ENCODE measurements at regions of chr13 and their contacts with region 1.

Region 1: GRCh38 chr13:34076943-34077703 is 259.2 kb downstream of the RFC3 start:
- DNase-seq: no peak
- ATAC-seq: peak in 1 of 4 donors; percentile 46
- H3K4me3 ChIP-seq: peak overlapping the region in 1 of 12 donors; percentile 24
- H3K27ac ChIP-seq: no peak overlapping the region
- H3K4me1 ChIP-seq: peaks cover 0 to 12% (median 3%) of the 10 kb centered on the region in 12 donors
- H3K27me3 ChIP-seq: no peaks in the 10 kb centered on the region
- CTCF ChIP-seq: peak; percentile 34 to 79 (median 66)
- POLR2A ChIP-seq: no peak

Region 2: GRCh38 chr13:33799950-33800592 is 277.1 kb before region 1 on chr13:
- intact Hi-C with region 1: loop called (anchors 2 to 10 kb)
- DNase-seq: no peak
- ATAC-seq: peak in 3 of 4 donors; percentile 28 to 58 (median 53)
- H3K4me3 ChIP-seq: peak overlapping the region in 5 of 12 donors; percentile 4 to 29 (median 15)
- H3K27ac ChIP-seq: peak overlapping the region in 8 of 12 donors; percentile 4 to 45 (median 18)
- H3K4me1 ChIP-seq: peaks cover 0 to 29% (median 13%) of the 10 kb centered on the region in 12 donors
- H3K27me3 ChIP-seq: no peaks in the 10 kb centered on the region
- CTCF ChIP-seq: peak in 11 of 12 donors; percentile 21 to 65 (median 54)
- POLR2A ChIP-seq: no peak

Region 3: DNA sequence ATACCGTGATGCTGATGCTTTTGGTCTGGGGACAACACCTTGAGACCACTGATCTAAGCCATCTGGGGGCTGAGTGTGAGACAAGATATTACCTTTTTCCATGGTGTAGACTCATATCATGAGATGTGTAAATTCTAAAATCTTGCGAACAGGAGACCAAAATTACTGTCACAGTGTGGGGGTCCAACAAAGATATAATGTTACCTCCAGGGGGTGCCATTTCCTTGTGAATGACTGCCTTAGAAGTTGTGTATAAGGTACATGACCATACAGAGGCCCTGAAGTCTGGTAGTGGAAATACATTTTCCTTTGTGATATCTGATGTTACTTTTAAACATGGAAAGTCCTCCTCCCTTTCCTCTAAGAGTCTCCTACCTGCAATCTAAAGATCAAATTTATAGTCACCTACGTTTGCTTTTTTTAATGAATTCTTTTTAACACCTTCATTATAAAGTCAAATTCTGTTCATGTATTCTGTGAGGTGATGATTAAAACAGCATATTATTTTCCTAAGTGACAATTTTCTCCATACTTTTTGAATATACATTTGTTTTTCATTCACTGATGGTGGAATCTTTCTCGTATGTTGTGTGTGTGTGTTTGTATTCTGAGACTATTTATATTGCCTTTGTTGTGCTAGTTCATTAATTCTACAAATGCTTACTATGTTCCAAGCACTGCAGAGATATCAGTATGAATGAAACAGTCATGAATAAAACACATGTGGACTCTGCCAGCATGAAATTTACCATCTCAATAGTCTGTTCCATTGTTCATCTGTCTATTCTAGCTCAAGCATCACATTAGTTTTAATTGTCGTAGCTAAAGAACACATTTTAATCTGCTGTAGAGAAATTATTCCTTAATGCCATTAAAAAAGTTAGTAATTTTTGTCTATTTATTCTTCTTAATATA is 145.5 kb before region 1 on chr13:
- intact Hi-C with region 1: loop called (anchors 2 to 5 kb)
- DNase-seq: peak in 1 of 5 donors; percentile 20
- ATAC-seq: peak in 3 of 4 donors; percentile 79 to 87 (median 84)
- H3K4me3 ChIP-seq: no peak overlapping the region
- H3K27ac ChIP-seq: no peak overlapping the region
- H3K4me1 ChIP-seq: peaks cover 0 to 12% (median 0%) of the 10 kb centered on the region in 12 donors
- H3K27me3 ChIP-seq: no peaks in the 10 kb centered on the region
- CTCF ChIP-seq: peak; percentile 26 to 71 (median 57)
- POLR2A ChIP-seq: no peak

Region 4: DNA sequence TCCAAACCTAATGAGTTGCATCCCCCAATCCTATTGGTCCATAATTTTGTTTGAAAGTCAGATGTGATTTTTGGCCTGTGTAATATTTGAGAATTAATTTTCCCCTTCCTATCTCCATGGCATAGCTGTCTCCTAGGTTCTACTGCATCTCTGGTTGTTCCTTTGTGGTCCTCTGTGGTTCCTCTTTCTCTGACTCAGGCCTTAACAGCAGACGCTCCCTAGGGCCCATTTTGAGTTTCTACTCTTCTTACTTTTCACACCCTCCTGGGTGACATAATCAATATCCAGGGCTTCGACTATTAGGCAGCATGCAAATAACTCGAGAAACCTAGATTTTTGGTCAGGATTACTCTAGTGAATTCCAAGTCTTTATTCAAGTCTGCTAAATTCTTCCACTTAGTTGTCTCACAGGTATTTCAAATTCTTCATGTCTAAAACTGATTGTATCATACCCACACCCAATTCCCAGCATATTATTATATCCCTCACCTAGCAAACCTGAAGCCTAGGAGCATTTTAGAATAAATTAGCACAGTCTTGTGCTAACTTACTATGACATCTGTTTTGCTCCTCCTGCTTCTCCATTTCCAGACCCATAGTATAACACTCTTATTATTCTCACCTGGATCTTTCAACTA is 98.4 kb before region 1 on chr13:
- intact Hi-C with region 1: no loop called
- DNase-seq: no peak
- ATAC-seq: no peak
- H3K4me3 ChIP-seq: no peak overlapping the region
- H3K27ac ChIP-seq: no peak overlapping the region
- H3K4me1 ChIP-seq: no peaks in the 10 kb centered on the region
- H3K27me3 ChIP-seq: no peaks in the 10 kb centered on the region
- CTCF ChIP-seq: no peak
- POLR2A ChIP-seq: no peak

Region 5: DNA sequence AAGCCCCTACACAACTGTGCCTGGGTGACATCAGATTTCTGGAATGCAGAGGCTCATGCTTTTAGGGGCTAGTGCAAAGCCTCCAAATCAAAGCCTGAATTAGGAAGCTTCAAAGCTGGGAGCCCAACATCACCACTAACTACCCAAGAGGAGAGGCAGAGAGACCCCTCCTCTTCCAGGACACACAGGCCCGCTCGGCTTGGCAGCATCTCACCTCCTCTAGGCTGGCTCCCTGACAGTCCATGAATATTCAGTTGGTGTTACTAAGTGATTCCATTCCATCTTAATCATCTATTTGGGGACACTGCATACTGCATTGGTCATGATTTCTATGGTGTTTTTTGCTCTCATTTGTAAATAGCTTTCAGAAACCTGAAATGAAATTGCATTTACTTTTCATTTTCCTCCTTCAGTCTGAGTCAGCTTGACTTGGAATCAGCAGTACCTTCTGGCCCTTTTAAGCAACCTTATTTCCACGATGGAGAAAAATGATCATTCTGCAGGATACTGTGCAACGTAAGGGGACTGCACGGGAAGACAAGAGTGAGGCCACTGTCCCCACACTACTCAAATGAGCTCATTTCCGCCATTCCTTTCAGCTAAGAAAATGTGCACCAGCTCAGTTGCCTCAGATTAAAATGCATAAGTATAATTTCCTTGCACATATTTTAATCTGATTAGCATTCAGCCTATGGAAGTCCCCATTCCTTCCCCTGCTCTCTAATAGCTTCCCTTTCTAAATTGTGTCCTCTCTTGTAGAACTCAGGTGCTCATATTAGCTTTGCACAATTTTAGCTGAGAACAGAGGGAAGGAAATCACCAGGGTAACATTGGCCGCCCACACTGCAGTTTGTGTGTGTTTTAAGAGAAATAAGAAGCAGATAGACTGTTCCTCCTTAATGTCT is 39.2 kb before region 1 on chr13:
- intact Hi-C with region 1: no loop called
- DNase-seq: no peak
- ATAC-seq: no peak
- H3K4me3 ChIP-seq: no peak overlapping the region
- H3K27ac ChIP-seq: no peak overlapping the region
- H3K4me1 ChIP-seq: no peaks in the 10 kb centered on the region
- H3K27me3 ChIP-seq: no peaks in the 10 kb centered on the region
- CTCF ChIP-seq: no peak
- POLR2A ChIP-seq: no peak

Region 6: GRCh38 chr13:34224877-34225276 is 147.8 kb after region 1 on chr13:
- intact Hi-C with region 1: no loop called
- DNase-seq: no peak
- ATAC-seq: no peak
- H3K4me3 ChIP-seq: no peak overlapping the region
- H3K27ac ChIP-seq: no peak overlapping the region
- H3K4me1 ChIP-seq: no peaks in the 10 kb centered on the region
- H3K27me3 ChIP-seq: no peaks in the 10 kb centered on the region
- CTCF ChIP-seq: no peak
- POLR2A ChIP-seq: no peak

Region 7: DNA sequence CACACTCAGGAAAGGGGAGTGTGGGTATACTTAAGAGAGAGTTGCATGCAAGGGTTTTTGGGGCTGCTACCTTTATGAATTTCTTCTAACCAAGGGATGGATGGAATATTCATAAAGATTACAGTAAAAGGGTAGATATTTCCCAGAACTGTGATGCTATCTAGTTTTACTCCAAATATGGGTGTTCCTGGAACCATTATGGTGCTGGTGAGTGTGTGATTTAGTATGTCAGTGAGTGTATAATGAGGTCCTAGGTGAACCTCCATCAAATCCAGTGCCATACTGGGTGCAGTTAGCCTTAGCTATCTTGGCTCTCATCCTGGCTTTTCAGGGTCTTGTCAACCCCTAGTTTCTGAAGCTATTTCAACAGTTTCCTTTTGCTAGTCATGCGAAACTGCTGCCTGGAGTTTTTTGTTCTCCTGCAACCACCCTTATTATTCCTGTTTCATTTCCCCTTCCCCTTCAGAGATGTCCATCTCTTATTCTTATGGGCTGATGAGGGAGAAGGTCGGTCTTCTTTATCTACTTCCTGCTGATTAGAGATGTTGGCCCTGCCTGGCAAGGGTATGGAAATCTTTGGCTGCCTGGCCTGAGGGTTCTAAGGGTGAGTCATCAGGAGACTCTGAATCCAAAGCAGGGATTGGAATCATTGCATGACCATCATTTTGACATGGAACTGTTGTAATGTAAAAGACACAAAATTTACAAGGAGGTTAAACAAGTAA is 1067.2 kb after region 1 on chr13:
- intact Hi-C with region 1: loop called in 1 of 10 experiments (anchors 10 kb)
- DNase-seq: no peak
- ATAC-seq: peak in 1 of 4 donors; percentile 29
- H3K4me3 ChIP-seq: no peak overlapping the region
- H3K27ac ChIP-seq: peak overlapping the region in 1 of 12 donors; percentile 53
- H3K4me1 ChIP-seq: peaks cover 0 to 25% (median 0%) of the 10 kb centered on the region in 12 donors
- H3K27me3 ChIP-seq: no peaks in the 10 kb centered on the region
- CTCF ChIP-seq: no peak
- POLR2A ChIP-seq: no peak

Region 8: GRCh38 chr13:35164324-35164932 is 1087.3 kb after region 1 on chr13:
- intact Hi-C with region 1: loop called in 6 of 10 experiments (anchors 5 to 10 kb)
- DNase-seq: no peak
- ATAC-seq: peak in 3 of 4 donors; percentile 53 to 68 (median 61)
- H3K4me3 ChIP-seq: no peak overlapping the region
- H3K27ac ChIP-seq: no peak overlapping the region
- H3K4me1 ChIP-seq: peaks cover 0 to 11% (median 0%) of the 10 kb centered on the region in 12 donors
- H3K27me3 ChIP-seq: no peaks in the 10 kb centered on the region
- CTCF ChIP-seq: peak; percentile 39 to 77 (median 66)
- POLR2A ChIP-seq: no peak